Mammary epithelial cell (primary cell): ENCODE measurements at regions of chrX and their contacts with region 1.

Region 1: DNA sequence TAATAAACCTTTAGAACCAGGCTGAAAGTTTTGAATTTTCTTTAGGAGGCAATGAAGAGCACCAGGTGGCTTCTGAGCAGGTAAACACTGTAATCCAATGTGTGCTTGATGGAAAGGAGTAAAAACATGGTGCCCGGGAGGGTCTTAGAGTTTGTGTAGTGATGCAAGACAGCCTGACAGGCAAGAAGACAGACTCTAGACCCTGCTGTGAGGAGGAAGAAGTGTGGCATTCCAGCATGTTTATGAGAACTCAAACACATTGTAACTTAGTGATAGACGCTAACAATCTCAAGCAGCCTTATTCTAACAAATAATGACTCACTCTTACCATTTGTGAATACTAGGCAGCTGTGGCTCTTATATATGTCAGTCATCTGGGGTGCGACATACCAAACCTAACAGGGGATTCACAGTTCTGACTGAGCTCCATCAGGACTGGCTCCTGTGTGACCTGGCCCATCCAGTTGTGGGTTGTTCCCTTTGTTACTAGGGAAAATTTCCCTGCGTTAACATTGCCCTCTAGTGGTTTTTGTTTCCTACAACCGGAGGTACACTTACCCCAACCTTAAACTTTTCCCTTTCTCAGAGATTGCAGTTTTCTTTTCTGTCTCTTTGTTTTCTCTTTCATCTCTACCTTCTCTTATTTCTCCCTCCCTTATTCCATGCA is 53.8 kb downstream of the VSIG4 start:
- DNase-seq: peak; percentile 59
- H3K4me3 ChIP-seq: no peak overlapping the region
- H3K27ac ChIP-seq: no peak overlapping the region
- H3K4me1 ChIP-seq: no peaks in the 10 kb centered on the region
- H3K27me3 ChIP-seq: no peaks in the 10 kb centered on the region
- CTCF ChIP-seq: peak; percentile 33 to 57

Region 2: DNA sequence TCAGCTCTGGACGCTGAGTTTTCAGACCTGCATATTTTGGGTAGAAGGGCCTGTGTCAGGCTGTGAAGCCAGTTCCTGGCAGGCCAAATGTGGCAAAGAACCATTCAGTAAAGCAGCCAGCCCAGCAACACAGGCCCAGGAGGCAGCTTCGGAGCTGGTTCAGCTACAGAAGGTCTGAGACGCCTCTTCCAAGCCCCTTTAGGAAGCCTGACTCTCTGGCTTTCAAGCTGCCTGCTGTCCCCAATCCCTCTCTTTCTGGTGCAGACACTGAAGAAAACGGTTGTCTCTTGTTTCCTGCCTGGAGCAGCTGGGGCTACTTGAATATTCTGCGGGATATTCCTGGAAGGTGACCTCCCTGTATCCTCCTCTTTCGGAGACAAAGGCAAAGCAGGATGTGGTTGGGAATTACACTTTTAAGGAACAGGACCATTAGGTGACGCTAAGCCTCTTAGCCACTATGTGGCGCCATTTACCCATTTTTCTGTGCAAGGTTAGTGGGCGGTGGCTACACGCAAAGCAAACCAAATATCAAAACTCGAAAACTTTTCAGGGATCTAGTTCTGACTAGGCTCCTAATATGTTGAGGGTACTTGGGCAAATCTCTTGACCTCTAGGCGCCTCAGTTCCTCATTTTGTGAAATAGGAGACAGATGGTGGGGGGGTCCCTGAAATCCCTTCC is 404.3 kb before region 1 on chrX:
- CTCF ChIA-PET with region 1: no interaction called
- dilution Hi-C with region 1: no loop called
- in situ Hi-C with region 1: loop called (anchors 10 to 25 kb)
- intact Hi-C with region 1: loop called (anchors 1 kb)
- DNase-seq: peak; percentile 49
- H3K4me3 ChIP-seq: no peak overlapping the region
- H3K27ac ChIP-seq: no peak overlapping the region
- H3K4me1 ChIP-seq: no peaks in the 10 kb centered on the region
- H3K27me3 ChIP-seq: no peaks in the 10 kb centered on the region
- CTCF ChIP-seq: peak; percentile 72 to 75

Region 3: GRCh38 chrX:65745992-65746391 is 240.1 kb before region 1 on chrX:
- CTCF ChIA-PET with region 1: interaction called, 4 read pairs
- dilution Hi-C with region 1: no loop called
- in situ Hi-C with region 1: loop called (anchors 10 to 25 kb)
- intact Hi-C with region 1: loop called (anchors 1 kb)
- DNase-seq: no peak
- H3K4me3 ChIP-seq: no peak overlapping the region
- H3K27ac ChIP-seq: no peak overlapping the region
- H3K4me1 ChIP-seq: peaks cover 11% of the 10 kb centered on the region
- H3K27me3 ChIP-seq: no peaks in the 10 kb centered on the region
- CTCF ChIP-seq: peak; percentile 25 to 37

Region 4: GRCh38 chrX:65871661-65872311 is 114.3 kb before region 1 on chrX:
- CTCF ChIA-PET with region 1: no interaction called
- dilution Hi-C with region 1: no loop called
- in situ Hi-C with region 1: no loop called
- intact Hi-C with region 1: loop called (anchors 1 kb)
- DNase-seq: peak; percentile 84
- H3K4me3 ChIP-seq: no peak overlapping the region
- H3K27ac ChIP-seq: peak overlapping the region; percentile 64
- H3K4me1 ChIP-seq: peaks cover 6% of the 10 kb centered on the region
- H3K27me3 ChIP-seq: no peaks in the 10 kb centered on the region
- CTCF ChIP-seq: peak; percentile 27 to 62

Region 5: DNA sequence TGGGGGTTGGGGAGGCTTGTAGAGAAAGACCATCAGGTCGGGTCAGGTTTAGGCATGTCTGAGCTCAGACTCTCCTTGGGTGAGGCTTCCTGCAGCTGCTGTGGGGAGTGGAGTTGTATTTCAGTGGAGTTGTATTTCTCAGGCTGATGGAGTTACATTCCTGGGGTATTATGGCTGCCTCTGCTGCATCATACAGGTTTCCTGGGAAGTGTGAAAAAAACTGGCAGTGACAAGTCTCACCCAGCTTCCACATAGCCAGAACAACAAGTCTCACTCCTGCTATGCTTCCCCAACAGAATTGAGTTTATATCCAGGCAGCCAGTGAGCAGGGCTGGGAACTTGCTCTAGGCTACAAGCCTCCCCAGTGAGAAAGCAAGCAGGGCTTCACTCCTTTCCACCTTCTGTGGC is 65.4 kb before region 1 on chrX:
- CTCF ChIA-PET with region 1: no interaction called
- dilution Hi-C with region 1: loop called (anchors 5 kb)
- in situ Hi-C with region 1: no loop called
- intact Hi-C with region 1: no loop called
- DNase-seq: peak; percentile 85
- H3K4me3 ChIP-seq: no peak overlapping the region
- H3K27ac ChIP-seq: peak overlapping the region; percentile 88
- H3K4me1 ChIP-seq: peaks cover 15% of the 10 kb centered on the region
- H3K27me3 ChIP-seq: no peaks in the 10 kb centered on the region
- CTCF ChIP-seq: no peak

Region 6: GRCh38 chrX:65971151-65971550 is 14.9 kb before region 1 on chrX:
- CTCF ChIA-PET with region 1: no interaction called
- dilution Hi-C with region 1: no loop called
- in situ Hi-C with region 1: no loop called
- intact Hi-C with region 1: no loop called
- DNase-seq: no peak
- H3K4me3 ChIP-seq: peak overlapping the region in 2 of 3 experiments; percentile 12 to 24
- H3K27ac ChIP-seq: no peak overlapping the region
- H3K4me1 ChIP-seq: no peaks in the 10 kb centered on the region
- H3K27me3 ChIP-seq: no peaks in the 10 kb centered on the region
- CTCF ChIP-seq: no peak